Left ventricle myocardium superior (tissue), 1 donor: ENCODE measurements at regions of chr3 and their contacts with region 1.

Region 1: GRCh38 chr3:49093853-49094767 is at the start of gene QRICH1:
- DNase-seq: peak; percentile 98
- ATAC-seq: peak; percentile 92
- total RNA-seq, gene QRICH1: 61.9 TPM

Region 2: DNA sequence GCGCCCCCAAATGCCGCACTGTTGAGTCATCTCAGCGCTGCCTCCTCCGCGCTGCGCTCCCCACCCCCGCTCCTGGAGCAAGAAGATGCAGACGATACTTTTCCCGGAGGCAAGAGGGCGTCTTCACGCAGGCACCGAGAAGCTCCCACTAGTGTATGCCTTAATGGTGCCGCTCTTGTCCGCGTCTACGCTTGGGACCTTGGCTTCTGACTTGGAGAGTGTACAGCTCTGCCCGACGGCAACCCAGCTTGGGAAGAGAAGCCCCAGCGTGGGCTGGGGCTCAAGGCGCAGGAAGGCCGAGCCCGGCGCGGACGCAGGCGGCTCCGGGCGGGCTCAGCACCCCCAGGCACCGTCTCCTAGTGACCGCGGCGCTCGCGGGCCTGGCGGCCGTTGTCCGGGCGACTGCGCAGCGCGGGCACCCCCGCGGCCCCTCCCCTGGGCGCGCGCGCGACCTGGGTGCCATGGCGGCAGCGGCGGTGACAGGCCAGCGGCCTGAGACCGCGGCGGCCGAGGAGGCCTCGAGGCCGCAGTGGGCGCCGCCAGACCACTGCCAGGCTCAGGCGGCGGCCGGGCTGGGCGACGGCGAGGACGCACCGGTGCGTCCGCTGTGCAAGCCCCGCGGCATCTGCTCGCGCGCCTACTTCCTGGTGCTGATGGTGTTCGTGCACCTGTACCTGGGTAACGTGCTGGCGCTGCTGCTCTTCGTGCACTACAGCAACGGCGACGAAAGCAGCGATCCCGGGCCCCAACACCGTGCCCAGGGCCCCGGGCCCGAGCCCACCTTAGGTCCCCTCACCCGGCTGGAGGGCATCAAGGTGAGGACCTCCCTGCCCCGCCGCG is 104.1 kb before region 1 on chr3 and contains the start of gene P4HTM:
- intact Hi-C with region 1: no loop called
- DNase-seq: peak; percentile 90
- ATAC-seq: peak; percentile 86
- total RNA-seq, gene P4HTM: 27.6 TPM

Region 3: GRCh38 chr3:49035281-49035680 is 58.8 kb before region 1 on chr3:
- intact Hi-C with region 1: loop called (anchors 5 kb)
- DNase-seq: no peak
- ATAC-seq: no peak

Region 4: GRCh38 chr3:49339945-49340800 is 246.1 kb after region 1 on chr3 and contains the start of gene USP4:
- intact Hi-C with region 1: no loop called
- DNase-seq: peak; percentile 96
- ATAC-seq: peak; percentile 98
- total RNA-seq, gene USP4: 37.3 TPM

Region 5: GRCh38 chr3:49512771-49513358 is 418.8 kb after region 1 on chr3:
- intact Hi-C with region 1: no loop called
- DNase-seq: no peak
- ATAC-seq: no peak